ENCODE measurements at regions of chr2 and their contacts with region 1.

Region 1: DNA sequence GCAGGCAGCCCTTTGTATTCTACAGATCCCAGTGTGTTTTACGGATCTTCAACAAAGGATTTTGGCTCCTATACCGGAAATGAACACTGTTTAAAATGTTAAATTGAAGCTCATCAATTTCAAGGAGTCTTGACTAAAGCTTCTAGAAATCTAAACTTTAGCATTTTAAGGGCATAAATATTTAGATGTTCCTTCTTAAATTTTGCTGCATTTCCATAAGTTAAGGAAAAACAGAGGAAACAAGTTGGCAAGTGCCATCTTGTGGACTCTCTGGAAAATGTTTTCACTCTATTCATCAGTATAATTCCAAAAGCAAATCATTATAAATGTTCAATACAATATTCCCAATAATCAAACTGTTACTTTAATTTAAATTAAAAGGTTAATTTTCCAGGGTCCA is 19.6 kb downstream of the CHN1 start:
- DNase-seq: no peak
- ATAC-seq: no peak
- H3K4me3 ChIP-seq: no peak overlapping the region
- H3K27ac ChIP-seq: no peak overlapping the region
- H3K4me1 ChIP-seq: peaks cover 4% of the 10 kb centered on the region
- H3K27me3 ChIP-seq: no peaks in the 10 kb centered on the region
- CTCF ChIP-seq: peak; percentile 39

Region 2: DNA sequence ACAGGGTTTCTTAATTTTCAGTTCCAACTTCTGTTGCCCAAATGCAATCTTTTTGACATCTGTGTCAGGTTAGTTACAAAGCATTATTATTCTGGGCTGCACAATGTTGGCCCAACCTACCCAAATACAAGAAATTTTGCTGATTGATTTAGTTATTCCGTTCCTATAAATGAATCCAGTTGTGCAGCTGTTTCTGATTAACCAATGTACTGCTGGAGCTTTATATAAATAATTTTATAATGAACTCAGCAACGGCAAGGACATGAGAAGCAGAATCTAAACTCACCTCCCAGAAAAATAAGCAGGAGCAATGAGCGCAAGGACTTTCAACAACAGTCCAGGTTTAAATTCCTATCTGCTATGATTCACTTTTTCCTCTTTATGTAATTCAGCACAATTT is 311.8 kb before region 1 on chr2:
- intact Hi-C with region 1: no loop called
- DNase-seq: no peak
- ATAC-seq: no peak
- H3K4me3 ChIP-seq: no peak overlapping the region
- H3K27ac ChIP-seq: no peak overlapping the region
- H3K4me1 ChIP-seq: no peaks in the 10 kb centered on the region
- H3K27me3 ChIP-seq: no peaks in the 10 kb centered on the region
- CTCF ChIP-seq: no peak

Region 3: GRCh38 chr2:174699993-174700766 is 285.4 kb before region 1 on chr2:
- intact Hi-C with region 1: no loop called
- DNase-seq: no peak
- ATAC-seq: peak; percentile 74 to 77
- H3K4me3 ChIP-seq: no peak overlapping the region
- H3K27ac ChIP-seq: no peak overlapping the region
- H3K4me1 ChIP-seq: no peaks in the 10 kb centered on the region
- H3K27me3 ChIP-seq: no peaks in the 10 kb centered on the region
- CTCF ChIP-seq: peak; percentile 76

Region 4: DNA sequence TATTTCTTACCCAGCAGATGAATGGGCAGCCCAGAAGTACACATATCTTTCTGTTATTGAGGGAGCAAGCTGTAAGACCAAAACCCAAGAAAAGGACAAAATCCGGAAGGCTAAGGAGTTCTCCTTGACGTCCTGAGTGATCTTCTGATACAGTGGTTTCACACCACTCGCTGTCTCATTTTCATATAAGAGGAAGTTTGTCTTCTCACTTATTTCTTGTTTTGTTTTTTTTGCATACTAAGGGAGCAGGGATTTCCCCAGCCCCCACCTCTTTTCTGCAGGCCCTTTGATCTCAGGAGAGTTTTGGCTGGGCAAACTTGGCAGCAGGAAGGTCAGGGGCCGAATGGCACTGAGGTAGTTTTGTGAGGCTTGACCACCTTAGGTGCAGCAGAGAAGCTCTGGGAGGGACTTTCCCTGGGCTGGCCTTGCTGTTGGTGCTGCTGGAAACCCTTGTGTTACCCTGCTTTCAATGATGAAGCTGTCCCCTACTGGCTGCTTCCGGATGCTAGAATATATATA is 234.6 kb before region 1 on chr2:
- intact Hi-C with region 1: loop called (anchors 10 kb)
- DNase-seq: no peak
- ATAC-seq: no peak
- H3K4me3 ChIP-seq: no peak overlapping the region
- H3K27ac ChIP-seq: no peak overlapping the region
- H3K4me1 ChIP-seq: no peaks in the 10 kb centered on the region
- H3K27me3 ChIP-seq: no peaks in the 10 kb centered on the region
- CTCF ChIP-seq: no peak

Region 5: DNA sequence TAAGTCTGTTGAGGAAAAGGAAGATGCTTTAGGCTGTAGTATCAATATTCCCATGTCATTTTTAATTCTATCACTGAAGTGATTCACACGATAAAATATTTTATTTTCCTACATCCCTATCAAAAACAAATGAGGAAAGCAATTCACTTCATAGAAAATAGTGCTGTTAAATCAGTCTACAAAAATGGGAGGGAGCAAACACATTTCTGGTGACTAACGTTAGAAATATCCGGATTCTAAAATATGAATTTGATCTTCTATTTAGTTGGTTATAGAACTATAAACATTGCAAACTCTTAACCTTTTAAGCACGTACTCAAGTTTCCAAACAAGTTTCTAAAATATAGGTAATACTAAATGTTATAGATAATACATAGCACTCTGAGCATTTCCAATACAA is 161.6 kb after region 1 on chr2:
- intact Hi-C with region 1: no loop called
- DNase-seq: no peak
- ATAC-seq: no peak
- H3K4me3 ChIP-seq: no peak overlapping the region
- H3K27ac ChIP-seq: no peak overlapping the region
- H3K4me1 ChIP-seq: peaks cover 4% of the 10 kb centered on the region
- H3K27me3 ChIP-seq: no peaks in the 10 kb centered on the region
- CTCF ChIP-seq: no peak